ENCODE measurements at regions of chr10 and their contacts with region 1.

Region 1: GRCh38 chr10:123154092-123154921 is at the start of gene BUB3:
- DNase-seq: peak; percentile 99
- ATAC-seq: peak; percentile 89
- H3K4me3 ChIP-seq: peak within 1 kb of the TSS; percentile 71 to 99 (median 99)
- H3K4me3 Mint-ChIP-seq: peak within 1 kb of the TSS; percentile 97
- H3K27ac ChIP-seq: peak within 1 kb of the TSS; percentile 84 to 87
- H3K27ac Mint-ChIP-seq: peak within 1 kb of the TSS; percentile 98
- H3K4me1 ChIP-seq: peaks cover 42 to 43% of the 10 kb centered on the region in 2 donors
- H3K4me1 Mint-ChIP-seq: peaks cover 61% of the 10 kb centered on the region
- H3K27me3 ChIP-seq: peaks cover 0 to 39% (median 29%) of the 10 kb centered on the region in 4 experiments
- H3K27me3 Mint-ChIP-seq: peaks cover 18% of the 10 kb centered on the region
- CTCF ChIP-seq: no peak
- total RNA-seq, gene BUB3: 112 and 115 TPM in 2 replicates

Region 2: DNA sequence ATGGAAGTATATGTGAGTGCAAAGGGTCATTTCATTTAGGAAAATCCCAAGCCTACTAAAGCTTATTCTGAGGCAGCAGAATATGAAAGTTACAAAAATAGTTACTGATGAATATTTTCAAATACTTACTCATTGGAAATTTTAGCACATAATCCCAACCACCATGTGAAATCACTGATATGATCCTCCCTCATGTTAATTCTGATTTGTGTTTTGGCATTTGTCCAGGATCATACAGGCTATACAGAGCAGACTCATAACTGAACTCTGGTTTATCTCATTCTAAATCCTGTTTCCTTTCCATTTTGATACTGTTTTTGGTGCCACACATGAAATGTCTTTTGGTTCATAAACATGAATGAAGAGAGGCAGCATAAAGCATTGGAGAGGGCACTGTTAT is 271.5 kb before region 1 on chr10:
- CTCF ChIA-PET with region 1: no interaction called
- POLR2A ChIA-PET with region 1: no interaction called
- intact Hi-C with region 1: no loop called
- DNase-seq: no peak
- ATAC-seq: no peak
- H3K4me3 ChIP-seq: no peak overlapping the region
- H3K4me3 Mint-ChIP-seq: no peak overlapping the region
- H3K27ac ChIP-seq: no peak overlapping the region
- H3K27ac Mint-ChIP-seq: no peak overlapping the region
- H3K4me1 ChIP-seq: peaks cover 12 to 17% of the 10 kb centered on the region in 2 donors
- H3K4me1 Mint-ChIP-seq: peaks cover 25% of the 10 kb centered on the region
- H3K27me3 ChIP-seq: no peaks in the 10 kb centered on the region
- H3K27me3 Mint-ChIP-seq: no peaks in the 10 kb centered on the region
- CTCF ChIP-seq: no peak

Region 3: GRCh38 chr10:122980209-122981065 is 173.9 kb before region 1 on chr10 and contains the start of gene PSTK:
- CTCF ChIA-PET with region 1: interaction called, 7 read pairs
- POLR2A ChIA-PET with region 1: interaction called, 3 read pairs
- intact Hi-C with region 1: loop called (anchors 1 kb)
- DNase-seq: peak; percentile 98
- ATAC-seq: peak; percentile 95
- H3K4me3 ChIP-seq: peak within 1 kb of the TSS; percentile 55 to 86 (median 64)
- H3K4me3 Mint-ChIP-seq: peak within 1 kb of the TSS; percentile 97
- H3K27ac ChIP-seq: peak within 1 kb of the TSS; percentile 81 to 89
- H3K27ac Mint-ChIP-seq: peak within 1 kb of the TSS; percentile 99
- H3K4me1 ChIP-seq: peaks cover 10 to 15% of the 10 kb centered on the region in 2 donors
- H3K4me1 Mint-ChIP-seq: peaks cover 14% of the 10 kb centered on the region
- H3K27me3 ChIP-seq: no peaks in the 10 kb centered on the region
- H3K27me3 Mint-ChIP-seq: peaks cover 5% of the 10 kb centered on the region
- CTCF ChIP-seq: peak; percentile 97
- total RNA-seq, gene PSTK: 8.2 and 8.5 TPM in 2 replicates

Region 4: DNA sequence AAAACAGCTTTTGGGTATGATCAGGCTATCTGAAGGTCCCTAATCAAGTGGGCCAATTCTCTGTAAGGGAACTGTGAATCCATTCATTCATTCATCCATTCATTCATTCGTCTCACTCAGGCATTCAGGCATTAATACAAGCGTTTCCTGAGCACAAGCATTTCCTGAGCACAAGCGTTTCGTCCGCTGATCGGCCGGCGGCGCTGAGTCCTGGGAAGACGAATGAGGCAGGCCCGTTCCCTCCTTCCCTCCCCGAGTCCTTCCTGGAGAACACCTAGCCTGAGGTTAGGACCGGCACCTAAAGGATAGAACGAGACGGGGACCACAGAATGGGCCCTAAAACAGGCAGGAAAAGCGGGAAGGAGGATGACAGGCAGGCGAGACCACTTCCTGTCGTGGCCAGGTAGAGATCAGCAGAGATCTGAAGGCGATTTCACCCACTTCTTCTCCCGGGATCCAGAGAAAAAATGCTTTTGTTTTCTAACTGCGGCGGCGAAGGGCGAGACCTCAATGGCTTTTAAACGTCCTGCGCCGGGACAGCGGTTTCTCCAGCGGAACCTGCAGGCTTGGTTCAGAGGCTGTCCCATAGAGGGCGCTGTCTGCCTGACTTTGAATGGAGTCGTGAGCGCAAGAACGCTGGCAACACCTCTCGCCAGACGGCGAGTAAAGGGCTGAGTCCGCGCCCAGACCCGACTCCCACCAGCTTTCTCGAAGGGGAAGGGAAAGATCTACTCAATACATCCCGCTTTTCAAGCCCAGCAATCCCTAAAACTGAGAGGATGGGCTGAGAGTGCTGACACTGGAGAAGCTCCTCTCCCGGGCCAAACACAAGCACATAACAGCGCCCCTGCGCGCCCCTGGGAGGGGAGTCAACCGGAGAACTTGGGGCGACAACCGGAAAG is 21.5 kb before region 1 on chr10:
- CTCF ChIA-PET with region 1: interaction called, 27 read pairs
- POLR2A ChIA-PET with region 1: interaction called, 4 read pairs
- intact Hi-C with region 1: loop called (anchors 1 kb)
- DNase-seq: peak; percentile 84
- ATAC-seq: peak; percentile 66
- H3K4me3 ChIP-seq: peak overlapping the region in 2 of 5 experiments; percentile 11 to 28
- H3K4me3 Mint-ChIP-seq: peak overlapping the region; percentile 84
- H3K27ac ChIP-seq: no peak overlapping the region
- H3K27ac Mint-ChIP-seq: peak overlapping the region; percentile 84
- H3K4me1 ChIP-seq: peaks cover 48 to 52% of the 10 kb centered on the region in 2 donors
- H3K4me1 Mint-ChIP-seq: peaks cover 32% of the 10 kb centered on the region
- H3K27me3 ChIP-seq: peaks cover 0 to 88% (median 70%) of the 10 kb centered on the region in 4 experiments
- H3K27me3 Mint-ChIP-seq: peaks cover 69% of the 10 kb centered on the region
- CTCF ChIP-seq: peak; percentile 85

Region 5: DNA sequence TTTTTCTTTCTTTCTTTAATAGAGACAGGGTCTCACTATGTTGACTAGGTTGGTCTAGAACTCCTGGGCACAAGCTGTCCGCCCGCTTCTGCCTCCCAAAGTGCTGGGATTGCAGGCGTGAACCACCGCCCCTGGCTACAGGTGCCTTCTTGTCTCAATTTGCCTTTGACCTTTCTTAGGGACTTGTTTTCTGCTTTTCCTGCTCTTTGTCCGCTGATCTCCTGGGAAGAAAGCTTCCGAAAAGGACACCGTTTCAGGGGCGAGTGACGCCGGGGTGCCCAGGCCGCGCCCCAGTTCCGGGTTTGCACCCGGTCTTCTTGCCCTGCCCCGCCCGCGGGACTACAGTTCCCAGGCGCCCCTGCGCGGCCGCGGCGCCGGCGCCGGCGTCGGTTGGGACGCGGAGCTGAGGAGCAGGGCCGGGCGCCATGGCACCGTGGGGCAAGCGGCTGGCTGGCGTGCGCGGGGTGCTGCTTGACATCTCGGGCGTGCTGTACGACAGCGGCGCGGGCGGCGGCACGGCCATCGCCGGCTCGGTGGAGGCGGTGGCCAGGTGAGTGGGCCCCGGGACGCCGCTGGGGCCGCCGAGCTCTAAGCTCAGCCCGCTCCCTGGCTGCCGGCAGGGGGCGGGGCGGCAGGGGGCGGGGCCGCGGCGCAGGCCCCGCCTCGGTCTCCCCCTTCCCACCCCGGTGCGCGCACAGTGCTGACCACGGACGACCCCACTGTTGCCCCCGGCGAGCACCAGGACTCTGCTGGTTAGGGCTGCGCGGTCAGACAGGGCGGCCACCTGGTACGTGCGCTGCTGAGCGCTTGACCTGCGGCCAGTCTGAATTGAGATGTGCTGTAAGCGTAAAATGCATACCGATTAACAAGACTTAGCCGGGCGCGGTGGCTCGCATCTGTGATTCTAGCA is 1307.4 kb after region 1 on chr10 and contains the start of gene LHPP:
- CTCF ChIA-PET with region 1: no interaction called
- POLR2A ChIA-PET with region 1: no interaction called
- intact Hi-C with region 1: loop called (anchors 10 kb)
- DNase-seq: peak; percentile 93
- ATAC-seq: peak; percentile 91
- H3K4me3 ChIP-seq: peak within 1 kb of the TSS in 4 of 5 experiments; percentile 43 to 71 (median 65)
- H3K4me3 Mint-ChIP-seq: peak within 1 kb of the TSS; percentile 97
- H3K27ac ChIP-seq: peak within 1 kb of the TSS; percentile 54 to 71
- H3K27ac Mint-ChIP-seq: peak within 1 kb of the TSS; percentile 98
- H3K4me1 ChIP-seq: peaks cover 23 to 35% of the 10 kb centered on the region in 2 donors
- H3K4me1 Mint-ChIP-seq: peaks cover 30% of the 10 kb centered on the region
- H3K27me3 ChIP-seq: peaks cover 0 to 3% (median under 1%) of the 10 kb centered on the region in 4 experiments
- H3K27me3 Mint-ChIP-seq: peaks cover 7% of the 10 kb centered on the region
- CTCF ChIP-seq: peak; percentile 35
- total RNA-seq, gene LHPP: 82.4 and 83.5 TPM in 2 replicates